Common myeloid progenitor, CD34-positive (primary cell): ENCODE measurements at regions of chr17 and their contacts with region 1.

Region 1: GRCh38 chr17:63819585-63820537 is 7.4 kb upstream of the PSMC5 start:
- DNase-seq: no peak
- H3K4me3 ChIP-seq: peak overlapping the region in 1 of 7 experiments; percentile 9
- H3K27ac ChIP-seq: no peak overlapping the region
- H3K4me1 ChIP-seq: peaks cover 0 to 8% (median 2%) of the 10 kb centered on the region in 4 experiments
- H3K27me3 ChIP-seq: no peaks in the 10 kb centered on the region

Region 2: GRCh38 chr17:63741221-63742049 is 78.4 kb before region 1 on chr17 and contains the start of gene STRADA:
- CTCF ChIA-PET with region 1: no interaction called
- POLR2A ChIA-PET with region 1: no interaction called
- DNase-seq: peak; percentile 98 to 99 (median 99)
- H3K4me3 ChIP-seq: peak within 1 kb of the TSS; percentile 80 to 95 (median 87)
- H3K27ac ChIP-seq: peak within 1 kb of the TSS; percentile 80 to 93
- H3K4me1 ChIP-seq: peaks cover 5 to 19% (median 18%) of the 10 kb centered on the region in 4 experiments
- H3K27me3 ChIP-seq: no peaks in the 10 kb centered on the region

Region 3: DNA sequence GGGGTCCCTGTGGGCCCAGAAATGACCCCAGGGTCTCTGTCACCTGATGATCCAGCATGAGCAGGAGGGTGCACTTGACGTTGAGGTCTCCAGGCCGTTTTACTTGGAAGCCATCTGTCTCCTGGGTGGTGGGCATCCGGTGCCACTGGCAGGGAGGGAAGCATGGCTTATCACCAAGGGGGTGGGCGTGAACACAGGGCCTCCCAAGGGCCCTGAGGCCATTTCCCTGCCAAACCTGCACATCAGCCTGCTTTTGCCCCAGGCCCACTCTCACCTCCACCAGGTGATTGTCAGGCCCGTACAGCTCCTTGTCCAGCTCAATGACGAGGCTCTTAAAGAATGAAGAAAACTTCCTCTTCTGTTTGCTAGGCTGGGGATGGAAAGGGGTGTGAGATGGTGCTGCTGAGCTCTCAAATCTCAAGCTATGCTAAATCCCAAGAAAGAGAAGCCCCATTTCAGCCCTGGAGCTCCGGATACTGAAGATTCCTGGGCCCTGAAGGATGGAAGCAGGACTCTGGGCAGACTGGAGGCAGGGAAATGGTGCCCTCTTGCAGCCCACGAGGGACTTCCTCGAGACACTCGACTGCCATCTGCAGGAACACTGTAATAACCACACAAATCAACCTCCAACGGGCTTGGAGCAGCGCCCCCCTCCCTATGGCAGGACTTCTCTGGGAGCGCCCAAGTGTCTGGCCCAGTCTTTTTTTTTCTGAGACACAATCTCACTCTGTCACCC is 14.7 kb after region 1 on chr17:
- CTCF ChIA-PET with region 1: interaction called, 10 read pairs
- POLR2A ChIA-PET with region 1: no interaction called
- DNase-seq: peak; percentile 92 to 95 (median 93)
- H3K4me3 ChIP-seq: no peak overlapping the region
- H3K27ac ChIP-seq: no peak overlapping the region
- H3K4me1 ChIP-seq: peaks cover 0 to 43% (median 35%) of the 10 kb centered on the region in 4 experiments
- H3K27me3 ChIP-seq: no peaks in the 10 kb centered on the region

Region 4: GRCh38 chr17:63876855-63877254 is 57.0 kb after region 1 on chr17:
- CTCF ChIA-PET with region 1: no interaction called
- POLR2A ChIA-PET with region 1: no interaction called
- DNase-seq: no peak
- H3K4me3 ChIP-seq: no peak overlapping the region
- H3K27ac ChIP-seq: no peak overlapping the region
- H3K4me1 ChIP-seq: no peaks in the 10 kb centered on the region
- H3K27me3 ChIP-seq: peaks cover 0 to 2% (median 0%) of the 10 kb centered on the region in 5 experiments

Region 5: GRCh38 chr17:63998050-63998720 is 178.3 kb after region 1 on chr17 and contains the start of gene PRR29:
- CTCF ChIA-PET with region 1: no interaction called
- POLR2A ChIA-PET with region 1: no interaction called
- DNase-seq: peak; percentile 65 to 73 (median 71)
- H3K4me3 ChIP-seq: peak within 1 kb of the TSS; percentile 54 to 90 (median 80)
- H3K27ac ChIP-seq: no peak within 1 kb of the TSS
- H3K4me1 ChIP-seq: peaks cover 0 to 35% (median 21%) of the 10 kb centered on the region in 4 experiments
- H3K27me3 ChIP-seq: no peaks in the 10 kb centered on the region